Activated naive CD4-positive, alpha-beta T cell treated with anti-CD3 and anti-CD28 coated beads for 36 hours (primary cell): ENCODE measurements at regions of chr17 and their contacts with region 1.

Region 1: GRCh38 chr17:55601874-55602364 is 90.7 kb upstream of the SMIM36 start:
- DNase-seq: peak; percentile 54
- H3K4me3 Mint-ChIP-seq: no peak overlapping the region
- H3K27ac Mint-ChIP-seq: no peak overlapping the region
- H3K4me1 Mint-ChIP-seq: no peaks in the 10 kb centered on the region
- H3K27me3 Mint-ChIP-seq: peaks cover 3% of the 10 kb centered on the region

Region 2: GRCh38 chr17:55394357-55395021 is 207.4 kb before region 1 on chr17:
- CTCF ChIA-PET with region 1: no interaction called
- intact Hi-C with region 1: no loop called
- DNase-seq: no peak
- H3K4me3 Mint-ChIP-seq: no peak overlapping the region
- H3K27ac Mint-ChIP-seq: no peak overlapping the region
- H3K4me1 Mint-ChIP-seq: no peaks in the 10 kb centered on the region
- H3K27me3 Mint-ChIP-seq: no peaks in the 10 kb centered on the region

Region 3: DNA sequence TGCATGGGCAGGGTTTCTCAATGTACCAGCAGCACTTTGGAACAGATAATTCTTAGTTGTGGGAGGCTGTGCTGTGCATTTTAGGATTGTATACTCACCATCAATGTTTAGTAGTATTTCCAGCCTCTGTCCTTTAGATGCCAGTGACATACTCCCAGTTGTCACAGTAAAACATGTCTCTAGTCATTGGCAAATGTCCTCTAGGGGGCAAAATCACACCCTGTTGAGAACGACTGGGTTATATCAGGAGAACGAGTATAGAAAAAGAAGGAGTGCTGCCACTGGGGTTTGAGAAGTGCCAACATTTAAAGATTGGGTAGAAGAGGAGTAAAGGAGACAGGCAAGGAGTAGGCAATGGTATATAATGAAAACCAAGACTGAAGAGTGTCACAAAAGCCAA is 52.8 kb before region 1 on chr17:
- CTCF ChIA-PET with region 1: interaction called, 12 read pairs
- intact Hi-C with region 1: loop called (anchors 1 kb)
- DNase-seq: peak; percentile 39
- H3K4me3 Mint-ChIP-seq: no peak overlapping the region
- H3K27ac Mint-ChIP-seq: no peak overlapping the region
- H3K4me1 Mint-ChIP-seq: peaks cover 11% of the 10 kb centered on the region
- H3K27me3 Mint-ChIP-seq: peaks cover 3% of the 10 kb centered on the region

Region 4: GRCh38 chr17:55635253-55635914 is 33.5 kb after region 1 on chr17:
- CTCF ChIA-PET with region 1: interaction called, 11 read pairs
- intact Hi-C with region 1: no loop called
- DNase-seq: no peak
- H3K4me3 Mint-ChIP-seq: no peak overlapping the region
- H3K27ac Mint-ChIP-seq: no peak overlapping the region
- H3K4me1 Mint-ChIP-seq: no peaks in the 10 kb centered on the region
- H3K27me3 Mint-ChIP-seq: peaks cover 6% of the 10 kb centered on the region

Region 5: DNA sequence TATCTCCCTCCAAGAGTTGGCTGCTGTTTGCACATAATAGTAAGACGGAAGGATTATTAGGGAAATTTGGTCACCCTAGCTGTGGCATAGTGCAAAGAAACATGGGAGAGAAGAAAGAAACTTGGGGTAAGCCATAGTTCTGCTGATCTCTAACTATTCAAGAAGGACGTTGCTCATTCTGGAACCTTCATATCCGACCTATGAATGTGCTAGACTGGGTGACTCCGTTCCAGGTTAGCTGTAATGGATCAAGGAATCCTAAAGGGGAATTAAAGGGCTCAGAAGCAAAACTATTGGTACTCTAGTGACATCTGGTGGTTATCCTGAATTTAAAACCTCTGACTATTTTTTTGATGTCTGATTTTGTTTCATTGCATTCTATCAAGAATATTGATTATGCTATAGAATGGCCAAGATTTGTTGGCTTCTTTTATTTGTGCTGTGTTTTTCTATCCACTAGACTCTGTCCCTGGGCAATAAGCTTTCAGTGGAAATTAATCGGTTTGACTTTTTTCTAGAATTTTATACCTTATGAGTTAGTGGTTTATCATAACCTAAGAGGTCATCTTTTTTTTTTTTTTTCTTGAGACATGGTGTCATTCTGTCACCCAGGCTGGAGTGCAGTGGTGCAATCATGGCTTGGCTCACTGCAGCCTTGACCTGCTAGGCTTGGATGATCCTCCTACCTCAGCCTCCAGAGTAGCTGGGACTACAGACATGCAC is 168.4 kb after region 1 on chr17:
- CTCF ChIA-PET with region 1: interaction called, 9 read pairs
- intact Hi-C with region 1: loop called (anchors 1 kb)
- DNase-seq: no peak
- H3K4me3 Mint-ChIP-seq: no peak overlapping the region
- H3K27ac Mint-ChIP-seq: no peak overlapping the region
- H3K4me1 Mint-ChIP-seq: no peaks in the 10 kb centered on the region
- H3K27me3 Mint-ChIP-seq: no peaks in the 10 kb centered on the region

Region 6: GRCh38 chr17:55931446-55931845 is 329.5 kb after region 1 on chr17:
- CTCF ChIA-PET with region 1: no interaction called
- intact Hi-C with region 1: no loop called
- DNase-seq: no peak
- H3K4me3 Mint-ChIP-seq: no peak overlapping the region
- H3K27ac Mint-ChIP-seq: no peak overlapping the region
- H3K4me1 Mint-ChIP-seq: peaks cover 2% of the 10 kb centered on the region
- H3K27me3 Mint-ChIP-seq: peaks cover 3% of the 10 kb centered on the region